AG04450 (cell line): ENCODE measurements at regions of chr2 and their contacts with region 1.

Region 1: GRCh38 chr2:106104332-106105062 is 89.6 kb downstream of the UXS1 start:
- DNase-seq: no peak
- H3K4me3 ChIP-seq: no peak overlapping the region
- H3K27ac ChIP-seq: no peak overlapping the region
- H3K27me3 ChIP-seq: no peaks in the 10 kb centered on the region
- CTCF ChIP-seq: peak; percentile 96

Region 2: GRCh38 chr2:106130248-106130998 is 25.9 kb after region 1 on chr2:
- CTCF ChIA-PET with region 1: no interaction called
- POLR2A ChIA-PET with region 1: no interaction called
- DNase-seq: no peak
- H3K4me3 ChIP-seq: no peak overlapping the region
- H3K27ac ChIP-seq: no peak overlapping the region
- H3K27me3 ChIP-seq: no peaks in the 10 kb centered on the region
- CTCF ChIP-seq: no peak

Region 3: GRCh38 chr2:106153781-106154180 is 49.3 kb after region 1 on chr2:
- CTCF ChIA-PET with region 1: no interaction called
- POLR2A ChIA-PET with region 1: no interaction called
- DNase-seq: no peak
- H3K4me3 ChIP-seq: no peak overlapping the region
- H3K27ac ChIP-seq: no peak overlapping the region
- H3K27me3 ChIP-seq: no peaks in the 10 kb centered on the region
- CTCF ChIP-seq: no peak

Region 4: GRCh38 chr2:106542811-106543259 is 438.3 kb after region 1 on chr2:
- CTCF ChIA-PET with region 1: interaction called, 18 read pairs
- POLR2A ChIA-PET with region 1: no interaction called
- DNase-seq: no peak
- H3K4me3 ChIP-seq: 0 out of 2 replicates have a peak overlapping the region, but pooled peaks have one; percentile 7
- H3K27ac ChIP-seq: no peak overlapping the region
- H3K27me3 ChIP-seq: peaks cover 2% of the 10 kb centered on the region
- CTCF ChIP-seq: peak; percentile 95